SK-N-SH (cell line): ENCODE measurements at regions of chr17 and their contacts with region 1.

Region 1: DNA sequence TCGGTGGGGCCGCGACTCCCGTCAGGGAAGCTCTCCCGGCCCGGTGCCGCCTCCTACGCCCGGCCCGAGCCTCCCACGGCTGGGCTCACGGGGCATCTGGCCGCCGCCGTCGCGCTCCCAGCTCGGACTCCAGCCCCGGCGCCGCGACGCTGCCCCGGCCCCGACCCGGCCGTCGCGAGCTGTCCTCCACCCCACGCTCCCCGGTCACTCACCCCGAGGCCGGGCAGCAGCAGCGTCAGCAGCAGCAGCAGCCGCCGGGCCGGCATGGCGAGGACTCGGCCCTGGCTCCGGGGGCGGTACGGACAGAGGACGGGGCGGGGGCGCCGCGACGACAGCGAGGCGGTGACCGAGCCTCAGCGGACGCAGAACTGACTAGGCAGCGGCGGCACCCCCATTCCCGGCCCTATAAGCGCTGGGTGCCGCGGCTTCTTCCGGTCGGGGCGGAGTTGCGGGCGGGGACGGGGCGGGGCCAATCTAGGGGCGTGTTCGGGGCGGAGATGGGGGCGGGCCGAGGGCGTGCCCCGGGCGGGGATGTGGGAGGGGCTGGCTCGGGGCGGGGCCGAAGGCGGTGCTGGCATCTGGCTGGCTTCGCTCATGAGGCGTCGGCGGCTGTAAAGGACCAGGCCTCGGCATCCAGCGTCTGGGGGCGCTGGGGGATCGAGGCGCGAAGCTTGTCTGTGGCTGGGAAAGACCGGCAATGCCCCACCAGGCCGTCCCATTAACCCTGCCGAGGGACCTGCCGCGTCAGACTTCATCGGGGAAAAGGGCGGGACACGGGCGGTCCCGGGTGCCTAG is at the start of gene ERN1:
- DNase-seq: peak; percentile 99
- H3K4me3 ChIP-seq: peak within 1 kb of the TSS; percentile 72 to 82
- H3K27ac ChIP-seq: peak within 1 kb of the TSS; percentile 62 to 68
- H3K4me1 ChIP-seq: peaks cover 13 to 18% of the 10 kb centered on the region in 2 experiments; a peak in 3 of 4 replicates
- H3K27me3 ChIP-seq: no peaks in the 10 kb centered on the region
- CTCF ChIP-seq: 0 out of 2 replicates have a peak, but pooled peaks have one; percentile 8
- EP300 ChIP-seq: no peak
- RAD21 ChIP-seq: 0 out of 2 replicates have a peak, but pooled peaks have one; percentile 23
- polyA plus RNA-seq, gene ERN1: 6.9 and 7.3 TPM in 2 replicates

Region 2: DNA sequence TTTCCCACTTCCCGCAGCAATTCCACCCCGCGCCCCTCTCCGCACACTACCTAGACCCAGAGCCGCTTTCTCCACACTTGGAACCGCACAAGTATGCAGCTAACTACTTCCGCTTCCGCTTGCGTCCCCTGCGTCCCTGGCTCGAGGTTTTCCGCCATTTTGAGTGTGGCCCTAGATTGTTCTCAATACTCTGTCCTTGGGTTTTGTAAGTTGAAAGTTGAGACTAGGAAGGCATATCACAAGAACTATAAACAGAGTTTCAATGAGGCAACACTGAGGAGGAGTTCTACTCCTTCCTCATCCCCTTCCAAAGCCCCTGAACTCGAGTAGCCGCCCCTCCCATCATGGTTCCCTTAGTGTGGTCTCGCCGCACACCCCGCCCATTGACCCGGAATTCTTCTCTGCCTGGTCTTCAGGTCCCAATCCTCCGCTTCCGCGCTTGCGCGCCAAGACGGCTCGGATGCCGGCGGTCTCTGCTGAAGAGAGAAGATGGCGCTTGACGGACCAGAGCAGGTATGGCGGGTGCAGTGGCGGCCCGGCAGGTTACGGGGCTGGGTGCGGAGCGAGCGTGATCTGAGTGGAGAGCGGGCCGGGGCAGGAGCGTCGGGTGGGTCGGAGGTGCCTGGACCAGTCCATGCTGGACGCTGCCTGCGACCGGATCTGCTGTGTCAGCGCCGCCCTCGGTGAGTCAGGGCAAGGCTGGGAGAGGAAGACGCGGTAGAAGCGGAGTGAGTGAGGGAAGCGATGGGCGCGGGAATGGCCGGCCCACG is 302.8 kb before region 1 on chr17 and contains the starts of genes FTSJ3 and PSMC5:
- CTCF ChIA-PET with region 1: no interaction called
- POLR2A ChIA-PET with region 1: no interaction called
- DNase-seq: peak; percentile 95
- H3K4me3 ChIP-seq: peak within 1 kb of the TSS; percentile 94 to 100
- H3K27ac ChIP-seq: peak within 1 kb of the TSS; percentile 90 to 99
- H3K4me1 ChIP-seq: peaks cover 9 to 37% of the 10 kb centered on the region in 2 experiments; a peak in 2 of 4 replicates
- H3K27me3 ChIP-seq: no peaks in the 10 kb centered on the region
- CTCF ChIP-seq: peak; percentile 56
- EP300 ChIP-seq: no peak; a peak in 1 of 4 replicates
- RAD21 ChIP-seq: no peak
- polyA plus RNA-seq, gene FTSJ3: 148 and 180 TPM in 2 replicates
- polyA plus RNA-seq, gene PSMC5: 424 and 468 TPM in 2 replicates

Region 3: GRCh38 chr17:63911657-63912426 is 218.1 kb before region 1 on chr17:
- CTCF ChIA-PET with region 1: interaction called, 17 read pairs
- POLR2A ChIA-PET with region 1: no interaction called
- DNase-seq: peak; percentile 88
- H3K4me3 ChIP-seq: no peak overlapping the region
- H3K27ac ChIP-seq: no peak overlapping the region
- H3K4me1 ChIP-seq: no peaks in the 10 kb centered on the region; a peak in 1 of 4 replicates
- H3K27me3 ChIP-seq: peaks cover 45% of the 10 kb centered on the region
- CTCF ChIP-seq: peak; percentile 70
- EP300 ChIP-seq: no peak
- RAD21 ChIP-seq: peak; percentile 62

Region 4: GRCh38 chr17:63984651-63985386 is 145.1 kb before region 1 on chr17:
- CTCF ChIA-PET with region 1: interaction called, 11 read pairs
- POLR2A ChIA-PET with region 1: no interaction called
- DNase-seq: no peak
- H3K4me3 ChIP-seq: no peak overlapping the region
- H3K27ac ChIP-seq: no peak overlapping the region
- H3K4me1 ChIP-seq: peaks cover 0 to 4% of the 10 kb centered on the region in 2 experiments; a peak in 1 of 4 replicates
- H3K27me3 ChIP-seq: no peaks in the 10 kb centered on the region
- CTCF ChIP-seq: no peak
- EP300 ChIP-seq: no peak
- RAD21 ChIP-seq: no peak

Region 5: GRCh38 chr17:64051153-64051552 is 78.8 kb before region 1 on chr17:
- CTCF ChIA-PET with region 1: interaction called, 46 read pairs
- POLR2A ChIA-PET with region 1: no interaction called
- DNase-seq: no peak
- H3K4me3 ChIP-seq: no peak overlapping the region
- H3K27ac ChIP-seq: no peak overlapping the region
- H3K4me1 ChIP-seq: no peaks in the 10 kb centered on the region
- H3K27me3 ChIP-seq: no peaks in the 10 kb centered on the region
- CTCF ChIP-seq: no peak
- EP300 ChIP-seq: no peak
- RAD21 ChIP-seq: no peak

Region 6: GRCh38 chr17:64097196-64097936 is 32.6 kb before region 1 on chr17:
- CTCF ChIA-PET with region 1: interaction called, 11 read pairs
- POLR2A ChIA-PET with region 1: no interaction called
- DNase-seq: no peak
- H3K4me3 ChIP-seq: no peak overlapping the region
- H3K27ac ChIP-seq: no peak overlapping the region; a peak in 1 of 4 replicates
- H3K4me1 ChIP-seq: no peaks in the 10 kb centered on the region; a peak in 1 of 4 replicates
- H3K27me3 ChIP-seq: no peaks in the 10 kb centered on the region
- CTCF ChIP-seq: no peak
- EP300 ChIP-seq: no peak
- RAD21 ChIP-seq: no peak

Region 7: DNA sequence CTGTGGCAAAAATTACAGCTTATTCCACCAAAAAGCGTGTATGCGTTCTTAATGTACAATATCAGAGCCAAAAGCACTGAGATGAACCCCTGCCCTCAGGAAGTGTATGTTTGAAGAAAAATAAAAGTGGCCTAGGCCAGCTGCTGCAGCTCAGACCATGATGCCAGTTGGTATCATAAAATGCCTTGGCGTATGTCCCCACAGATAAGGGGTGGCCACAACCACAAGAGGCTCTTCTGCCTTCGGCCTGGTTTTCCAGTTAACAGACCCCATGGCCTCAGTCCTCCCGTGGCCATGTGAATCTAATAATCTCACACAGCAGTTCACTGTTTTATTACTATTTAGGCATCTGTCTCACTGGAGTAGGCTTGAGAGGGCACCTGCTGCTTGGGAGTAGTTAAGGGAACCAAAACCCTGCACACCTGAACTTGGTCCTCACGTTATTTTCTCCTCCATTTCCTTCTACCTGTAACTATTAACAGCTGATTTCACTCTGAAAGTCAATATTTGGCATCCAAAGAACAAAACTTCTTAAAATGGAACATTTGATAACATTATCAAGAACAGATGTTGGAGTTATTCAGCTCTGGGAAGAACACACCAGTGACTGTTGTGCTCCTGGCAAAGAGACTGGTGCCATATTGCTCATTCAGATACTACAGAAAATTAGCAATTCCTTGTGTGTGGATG is 34.8 kb after region 1 on chr17:
- CTCF ChIA-PET with region 1: interaction called, 10 read pairs
- POLR2A ChIA-PET with region 1: no interaction called
- DNase-seq: peak; percentile 46
- H3K4me3 ChIP-seq: no peak overlapping the region
- H3K27ac ChIP-seq: peak overlapping the region in 1 of 2 experiments; percentile 88; a peak in 2 of 4 replicates
- H3K4me1 ChIP-seq: peaks cover 0 to 38% of the 10 kb centered on the region in 2 experiments; a peak in 2 of 4 replicates
- H3K27me3 ChIP-seq: no peaks in the 10 kb centered on the region
- CTCF ChIP-seq: no peak
- EP300 ChIP-seq: no peak; a peak in 1 of 4 replicates
- RAD21 ChIP-seq: no peak

Region 8: GRCh38 chr17:64291254-64291851 is 161.4 kb after region 1 on chr17:
- CTCF ChIA-PET with region 1: interaction called, 17 read pairs
- POLR2A ChIA-PET with region 1: no interaction called
- DNase-seq: no peak
- H3K4me3 ChIP-seq: no peak overlapping the region
- H3K27ac ChIP-seq: no peak overlapping the region
- H3K4me1 ChIP-seq: no peaks in the 10 kb centered on the region
- H3K27me3 ChIP-seq: no peaks in the 10 kb centered on the region
- CTCF ChIP-seq: peak; percentile 58
- EP300 ChIP-seq: no peak
- RAD21 ChIP-seq: peak; percentile 26

Region 9: DNA sequence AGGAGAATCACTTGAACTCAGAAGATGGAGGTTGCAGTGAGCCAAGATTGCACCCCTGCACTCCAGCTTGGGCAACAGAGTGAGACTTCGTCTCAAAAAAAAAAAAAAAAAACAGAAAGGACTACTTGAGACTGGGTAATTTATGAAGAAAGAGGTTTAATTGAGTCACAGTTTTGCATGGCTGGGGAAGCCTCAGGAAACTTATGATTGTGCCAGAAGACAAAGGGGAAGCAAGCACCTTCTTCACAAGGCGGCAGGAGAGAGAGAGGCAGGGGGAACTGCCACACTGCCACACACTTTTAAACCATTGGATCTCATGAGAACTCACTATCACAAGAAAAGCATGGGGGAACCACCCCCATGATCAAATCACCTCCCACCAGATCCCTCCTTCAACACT is 310.0 kb after region 1 on chr17:
- CTCF ChIA-PET with region 1: no interaction called
- POLR2A ChIA-PET with region 1: no interaction called
- DNase-seq: no peak
- H3K4me3 ChIP-seq: no peak overlapping the region
- H3K27ac ChIP-seq: no peak overlapping the region
- H3K4me1 ChIP-seq: no peaks in the 10 kb centered on the region
- H3K27me3 ChIP-seq: no peaks in the 10 kb centered on the region
- CTCF ChIP-seq: no peak
- EP300 ChIP-seq: no peak
- RAD21 ChIP-seq: no peak